ENCODE measurements at regions of chr9 and their contacts with region 1.

Region 1: GRCh38 chr9:98002808-98003207 is 19.7 kb downstream of the ANP32B start:
- DNase-seq: no peak
- H3K4me3 ChIP-seq: no peak overlapping the region
- H3K27ac ChIP-seq: no peak overlapping the region
- H3K4me1 ChIP-seq: peaks cover 9% of the 10 kb centered on the region
- H3K27me3 ChIP-seq: no peaks in the 10 kb centered on the region
- CTCF ChIP-seq: no peak
- POLR2A ChIP-seq: no peak

Region 2: GRCh38 chr9:97990266-97990665 is 12.5 kb before region 1 on chr9:
- CTCF ChIA-PET with region 1: interaction called, 8 read pairs
- POLR2A ChIA-PET with region 1: interaction called, 3 read pairs
- dilution Hi-C with region 1: no loop called
- intact Hi-C with region 1: loop called (anchors 1 kb)
- DNase-seq: peak; percentile 40
- H3K4me3 ChIP-seq: no peak overlapping the region
- H3K27ac ChIP-seq: peak overlapping the region; percentile 23
- H3K4me1 ChIP-seq: peaks cover 23% of the 10 kb centered on the region
- H3K27me3 ChIP-seq: no peaks in the 10 kb centered on the region
- CTCF ChIP-seq: peak; percentile 9 to 17
- POLR2A ChIP-seq: no peak

Measured in endothelial cell of umbilical vein (primary cell).